ENCODE measurements at regions of chr7 and their contacts with region 1.

Region 1: GRCh38 chr7:100889761-100890634 is 483 bp upstream of the UFSP1 start:
- DNase-seq: peak; percentile 95 to 97 (median 96)
- ATAC-seq: peak; percentile 91 to 97 (median 94)
- H3K4me3 ChIP-seq: peak overlapping the region; percentile 48 to 81 (median 73)
- H3K27ac ChIP-seq: peak overlapping the region; percentile 76 to 93 (median 90)
- H3K4me1 ChIP-seq: peaks cover 4 to 59% (median 30%) of the 10 kb centered on the region in 12 donors
- H3K27me3 ChIP-seq: peaks cover 0 to 36% (median 6%) of the 10 kb centered on the region in 9 donors
- CTCF ChIP-seq: peak in 3 of 12 donors; percentile 15 to 26 (median 17)
- POLR2A ChIP-seq: peak in 1 of 2 donors; percentile 61

Region 2: DNA sequence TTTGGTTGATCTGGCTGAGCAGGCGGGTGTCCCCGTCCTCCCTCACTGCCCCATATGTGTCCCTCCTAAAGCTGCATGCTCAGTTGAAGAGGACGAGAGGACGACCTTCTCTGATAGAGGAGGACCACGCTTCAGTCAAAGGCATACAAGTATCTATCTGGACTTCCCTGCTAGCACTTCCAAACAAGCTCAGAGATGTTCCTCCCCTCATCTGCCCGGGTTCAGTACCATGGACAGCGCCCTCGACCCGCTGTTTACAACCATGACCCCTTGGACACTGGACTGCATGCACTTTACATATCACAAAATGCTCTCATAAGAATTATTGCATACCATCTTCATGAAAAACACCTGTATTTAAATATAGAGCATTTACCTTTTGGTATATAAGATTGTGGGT is 168.4 kb after region 1 on chr7:
- intact Hi-C with region 1: loop called in 2 of 10 experiments (anchors 1 to 5 kb)
- DNase-seq: peak; percentile 45 to 77 (median 64)
- ATAC-seq: peak; percentile 68 to 81 (median 74)
- H3K4me3 ChIP-seq: no peak overlapping the region
- H3K27ac ChIP-seq: no peak overlapping the region
- H3K4me1 ChIP-seq: no peaks in the 10 kb centered on the region
- H3K27me3 ChIP-seq: peaks cover 0 to 65% (median 12%) of the 10 kb centered on the region in 9 donors
- CTCF ChIP-seq: no peak
- POLR2A ChIP-seq: no peak

Region 3: GRCh38 chr7:101138213-101138870 is 248.3 kb after region 1 on chr7:
- intact Hi-C with region 1: loop called in 5 of 10 experiments (anchors 5 to 10 kb)
- DNase-seq: peak in 4 of 5 donors; percentile 66 to 91 (median 82)
- ATAC-seq: peak; percentile 68 to 93 (median 92)
- H3K4me3 ChIP-seq: peak overlapping the region in 3 of 12 donors; percentile 0 to 15 (median 4)
- H3K27ac ChIP-seq: peak overlapping the region in 7 of 12 donors; percentile 41 to 76 (median 55)
- H3K4me1 ChIP-seq: peaks cover 0 to 21% (median 10%) of the 10 kb centered on the region in 12 donors
- H3K27me3 ChIP-seq: no peaks in the 10 kb centered on the region
- CTCF ChIP-seq: peak; percentile 72 to 89 (median 84)
- POLR2A ChIP-seq: no peak

Region 4: DNA sequence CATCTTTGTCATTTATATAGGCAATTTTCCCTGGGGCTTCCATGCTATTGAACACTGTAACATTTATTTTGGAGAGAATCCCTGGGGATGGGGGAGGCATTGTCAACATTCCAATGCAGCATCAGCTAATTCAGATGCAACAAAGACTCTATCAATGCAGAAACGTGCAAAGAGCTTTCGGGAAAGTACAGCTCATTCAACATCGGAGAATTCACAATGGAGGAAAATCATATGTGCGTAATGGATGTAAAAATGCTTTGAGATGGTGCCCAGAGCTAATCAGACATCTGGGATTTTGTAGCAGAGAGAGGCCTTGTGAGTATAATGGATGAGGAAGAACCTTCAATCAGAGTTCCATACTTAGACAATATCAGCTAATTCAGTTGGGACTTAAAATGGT is 383.2 kb after region 1 on chr7:
- intact Hi-C with region 1: loop called in 1 of 10 experiments (anchors 10 kb)
- DNase-seq: no peak
- ATAC-seq: no peak
- H3K4me3 ChIP-seq: no peak overlapping the region
- H3K27ac ChIP-seq: no peak overlapping the region
- H3K4me1 ChIP-seq: no peaks in the 10 kb centered on the region
- H3K27me3 ChIP-seq: peaks cover 0 to 22% (median 0%) of the 10 kb centered on the region in 9 donors
- CTCF ChIP-seq: no peak
- POLR2A ChIP-seq: no peak

Region 5: GRCh38 chr7:101299511-101300464 is 409.8 kb after region 1 on chr7:
- intact Hi-C with region 1: loop called in 1 of 10 experiments (anchors 10 kb)
- DNase-seq: peak in 1 of 5 donors; percentile 53
- ATAC-seq: no peak
- H3K4me3 ChIP-seq: no peak overlapping the region
- H3K27ac ChIP-seq: no peak overlapping the region
- H3K4me1 ChIP-seq: peaks cover 0 to 8% (median 0%) of the 10 kb centered on the region in 12 donors
- H3K27me3 ChIP-seq: peaks cover 59 to 98% (median 90%) of the 10 kb centered on the region in 9 donors
- CTCF ChIP-seq: no peak
- POLR2A ChIP-seq: no peak